ENCODE measurements at regions of chr17 and their contacts with region 1.

Region 1: DNA sequence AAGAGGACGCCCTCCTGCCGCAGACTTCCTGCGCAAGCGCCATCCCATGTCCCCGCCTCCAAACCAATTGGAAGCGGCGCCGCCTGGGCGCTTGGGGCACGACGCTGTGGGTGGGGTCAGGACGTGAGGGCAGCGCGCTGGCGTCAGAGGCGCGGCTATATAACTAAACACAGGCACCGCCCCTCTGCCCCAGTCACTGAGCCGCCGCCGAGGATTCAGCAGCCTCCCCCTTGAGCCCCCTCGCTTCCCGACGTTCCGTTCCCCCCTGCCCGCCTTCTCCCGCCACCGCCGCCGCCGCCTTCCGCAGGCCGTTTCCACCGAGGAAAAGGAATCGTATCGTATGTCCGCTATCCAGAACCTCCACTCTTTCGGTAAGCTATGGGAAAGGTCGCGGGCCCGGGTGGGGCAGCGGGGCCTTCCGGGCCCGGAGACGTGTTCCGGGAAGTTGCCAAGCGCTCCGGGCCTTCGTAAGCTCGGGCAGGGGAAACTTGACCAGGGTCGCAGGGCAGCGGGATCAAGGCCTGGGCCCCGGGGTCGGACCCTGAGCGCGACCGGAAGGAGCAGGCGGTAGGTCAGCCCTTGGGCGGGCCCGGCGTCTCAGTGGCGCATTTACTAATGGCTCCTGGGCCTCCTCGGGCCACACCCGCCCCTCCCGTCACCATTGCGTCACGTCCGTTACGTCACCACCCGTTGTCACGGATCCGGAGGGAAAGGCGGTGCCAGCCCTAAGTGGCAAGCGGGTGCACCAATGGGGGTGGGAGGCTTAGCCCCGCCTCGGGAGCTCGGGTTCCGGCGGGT is at the start of gene EIF1:
- DNase-seq: peak; percentile 99 to 100 (median 100)
- ATAC-seq: peak; percentile 74
- H3K4me3 ChIP-seq: peak within 1 kb of the TSS; percentile 81
- H3K4me3 Mint-ChIP-seq: peak within 1 kb of the TSS; percentile 99
- H3K27ac ChIP-seq: peak within 1 kb of the TSS; percentile 99 to 100
- H3K27ac Mint-ChIP-seq: peak within 1 kb of the TSS; percentile 100
- H3K4me1 ChIP-seq: peaks cover 36% of the 10 kb centered on the region
- H3K4me1 Mint-ChIP-seq: peaks cover 50% of the 10 kb centered on the region
- H3K27me3 ChIP-seq: no peaks in the 10 kb centered on the region
- H3K27me3 Mint-ChIP-seq: peaks cover 10% of the 10 kb centered on the region
- CTCF ChIP-seq: no peak
- total RNA-seq, gene EIF1: 3,351 to 3,391 TPM

Region 2: GRCh38 chr17:40818733-40819527 is 870.0 kb before region 1 on chr17:
- CTCF ChIA-PET with region 1: interaction called, 4 read pairs
- POLR2A ChIA-PET with region 1: interaction called, 70 read pairs
- intact Hi-C with region 1: loop called in 1 of 2 experiments (anchors 2 kb)
- DNase-seq: peak; percentile 68 to 96 (median 80)
- ATAC-seq: peak; percentile 83
- H3K4me3 ChIP-seq: peak overlapping the region; percentile 75
- H3K4me3 Mint-ChIP-seq: peak overlapping the region; percentile 96
- H3K27ac ChIP-seq: peak overlapping the region; percentile 62 to 74
- H3K27ac Mint-ChIP-seq: peak overlapping the region; percentile 89
- H3K4me1 ChIP-seq: peaks cover 5% of the 10 kb centered on the region
- H3K4me1 Mint-ChIP-seq: peaks cover 33% of the 10 kb centered on the region
- H3K27me3 ChIP-seq: peaks cover 0 to 1% of the 10 kb centered on the region in 2 experiments
- H3K27me3 Mint-ChIP-seq: peaks cover 15% of the 10 kb centered on the region
- CTCF ChIP-seq: no peak

Region 3: DNA sequence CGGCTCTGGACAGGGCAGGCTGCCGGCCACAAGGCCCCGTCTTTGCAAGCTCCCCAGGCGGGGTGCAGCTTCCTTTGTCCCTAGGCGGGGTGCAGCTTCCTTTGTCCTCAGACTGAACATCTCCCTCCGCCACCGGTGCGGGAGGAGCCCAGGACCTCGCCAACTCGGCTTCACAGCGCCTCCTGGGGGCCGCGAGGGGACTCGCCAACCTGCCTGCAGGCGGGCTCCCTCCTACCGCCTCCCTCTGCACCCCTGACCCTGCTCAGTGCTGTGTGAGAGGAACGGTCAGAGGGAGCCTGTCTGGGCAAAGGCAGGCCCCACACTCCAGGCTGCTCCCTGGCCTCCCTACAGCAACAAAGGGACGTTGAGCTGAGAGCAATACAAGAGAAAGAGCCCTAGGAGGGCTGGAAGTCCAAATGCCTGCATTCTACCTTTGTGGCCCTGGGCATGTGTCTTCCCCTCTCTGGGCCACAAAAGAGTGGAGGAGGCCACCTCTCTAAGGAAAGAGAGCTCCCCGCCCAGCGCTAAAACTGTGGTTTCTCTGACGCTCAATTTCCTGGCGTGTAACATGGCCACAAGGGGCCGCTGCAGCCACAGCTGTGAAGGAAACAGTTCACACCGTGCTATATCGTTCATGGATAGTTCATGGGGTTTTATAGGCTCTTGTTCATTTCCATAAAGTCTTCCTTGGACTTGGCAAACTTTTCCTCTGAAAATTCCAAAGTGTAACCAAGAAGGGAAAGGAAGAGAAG is 139.9 kb before region 1 on chr17:
- CTCF ChIA-PET with region 1: interaction called, 4 read pairs
- POLR2A ChIA-PET with region 1: interaction called, 13 read pairs
- intact Hi-C with region 1: no loop called
- DNase-seq: peak; percentile 73 to 91 (median 82)
- ATAC-seq: peak; percentile 85
- H3K4me3 ChIP-seq: peak overlapping the region; percentile 42
- H3K4me3 Mint-ChIP-seq: peak overlapping the region; percentile 2
- H3K27ac ChIP-seq: no peak overlapping the region
- H3K27ac Mint-ChIP-seq: peak overlapping the region; percentile 65
- H3K4me1 ChIP-seq: peaks cover 23% of the 10 kb centered on the region
- H3K4me1 Mint-ChIP-seq: peaks cover 9% of the 10 kb centered on the region
- H3K27me3 ChIP-seq: no peaks in the 10 kb centered on the region
- H3K27me3 Mint-ChIP-seq: peaks cover 15% of the 10 kb centered on the region
- CTCF ChIP-seq: peak; percentile 96

Region 4: GRCh38 chr17:41672153-41672552 is 16.7 kb before region 1 on chr17:
- CTCF ChIA-PET with region 1: interaction called, 61 read pairs
- POLR2A ChIA-PET with region 1: interaction called, 373 read pairs
- intact Hi-C with region 1: loop called in 1 of 2 experiments (anchors 2 kb)
- DNase-seq: no peak
- ATAC-seq: no peak
- H3K4me3 ChIP-seq: no peak overlapping the region
- H3K4me3 Mint-ChIP-seq: no peak overlapping the region
- H3K27ac ChIP-seq: no peak overlapping the region
- H3K27ac Mint-ChIP-seq: no peak overlapping the region
- H3K4me1 ChIP-seq: peaks cover 19% of the 10 kb centered on the region
- H3K4me1 Mint-ChIP-seq: peaks cover 14% of the 10 kb centered on the region
- H3K27me3 ChIP-seq: no peaks in the 10 kb centered on the region
- H3K27me3 Mint-ChIP-seq: no peaks in the 10 kb centered on the region
- CTCF ChIP-seq: no peak

Region 5: GRCh38 chr17:41811549-41812380 is 122.9 kb after region 1 on chr17 and contains the start of gene P3H4:
- CTCF ChIA-PET with region 1: no interaction called
- POLR2A ChIA-PET with region 1: interaction called, 24 read pairs
- intact Hi-C with region 1: no loop called
- DNase-seq: peak; percentile 44 to 90 (median 70)
- ATAC-seq: peak; percentile 91
- H3K4me3 ChIP-seq: peak within 1 kb of the TSS; percentile 60
- H3K4me3 Mint-ChIP-seq: peak within 1 kb of the TSS; percentile 97
- H3K27ac ChIP-seq: no peak within 1 kb of the TSS
- H3K27ac Mint-ChIP-seq: peak within 1 kb of the TSS; percentile 36
- H3K4me1 ChIP-seq: peaks cover 34% of the 10 kb centered on the region
- H3K4me1 Mint-ChIP-seq: peaks cover 22% of the 10 kb centered on the region
- H3K27me3 ChIP-seq: no peaks in the 10 kb centered on the region
- H3K27me3 Mint-ChIP-seq: no peaks in the 10 kb centered on the region
- CTCF ChIP-seq: peak; percentile 68
- total RNA-seq, gene P3H4: 1.3 to 2.3 TPM

Region 6: GRCh38 chr17:41918314-41919164 is 229.6 kb after region 1 on chr17 and contains the start of gene ACLY:
- CTCF ChIA-PET with region 1: no interaction called
- POLR2A ChIA-PET with region 1: interaction called, 22 read pairs
- intact Hi-C with region 1: no loop called
- DNase-seq: peak; percentile 87 to 98 (median 94)
- ATAC-seq: peak; percentile 99
- H3K4me3 ChIP-seq: peak within 1 kb of the TSS; percentile 90
- H3K4me3 Mint-ChIP-seq: peak within 1 kb of the TSS; percentile 95
- H3K27ac ChIP-seq: peak within 1 kb of the TSS; percentile 69 to 74
- H3K27ac Mint-ChIP-seq: peak within 1 kb of the TSS; percentile 64
- H3K4me1 ChIP-seq: peaks cover 35% of the 10 kb centered on the region
- H3K4me1 Mint-ChIP-seq: peaks cover 27% of the 10 kb centered on the region
- H3K27me3 ChIP-seq: no peaks in the 10 kb centered on the region
- H3K27me3 Mint-ChIP-seq: no peaks in the 10 kb centered on the region
- CTCF ChIP-seq: no peak
- total RNA-seq, gene ACLY: 25.9 to 28.3 TPM

Region 7: GRCh38 chr17:41966463-41967140 is 277.7 kb after region 1 on chr17 and contains the start of gene CNP:
- CTCF ChIA-PET with region 1: no interaction called
- POLR2A ChIA-PET with region 1: interaction called, 19 read pairs
- intact Hi-C with region 1: no loop called
- DNase-seq: peak; percentile 79 to 96 (median 90)
- ATAC-seq: peak; percentile 80
- H3K4me3 ChIP-seq: peak within 1 kb of the TSS; percentile 91
- H3K4me3 Mint-ChIP-seq: peak within 1 kb of the TSS; percentile 85
- H3K27ac ChIP-seq: peak within 1 kb of the TSS; percentile 65 to 74
- H3K27ac Mint-ChIP-seq: peak within 1 kb of the TSS; percentile 94
- H3K4me1 ChIP-seq: peaks cover 41% of the 10 kb centered on the region
- H3K4me1 Mint-ChIP-seq: peaks cover 39% of the 10 kb centered on the region
- H3K27me3 ChIP-seq: no peaks in the 10 kb centered on the region
- H3K27me3 Mint-ChIP-seq: no peaks in the 10 kb centered on the region
- CTCF ChIP-seq: no peak
- total RNA-seq, gene CNP: 19.2 to 23.4 TPM

Measured in CD4-positive, alpha-beta T cell (primary cell).